Natural killer cell (primary cell): ENCODE measurements at regions of chr1 and their contacts with region 1.

Region 1: DNA sequence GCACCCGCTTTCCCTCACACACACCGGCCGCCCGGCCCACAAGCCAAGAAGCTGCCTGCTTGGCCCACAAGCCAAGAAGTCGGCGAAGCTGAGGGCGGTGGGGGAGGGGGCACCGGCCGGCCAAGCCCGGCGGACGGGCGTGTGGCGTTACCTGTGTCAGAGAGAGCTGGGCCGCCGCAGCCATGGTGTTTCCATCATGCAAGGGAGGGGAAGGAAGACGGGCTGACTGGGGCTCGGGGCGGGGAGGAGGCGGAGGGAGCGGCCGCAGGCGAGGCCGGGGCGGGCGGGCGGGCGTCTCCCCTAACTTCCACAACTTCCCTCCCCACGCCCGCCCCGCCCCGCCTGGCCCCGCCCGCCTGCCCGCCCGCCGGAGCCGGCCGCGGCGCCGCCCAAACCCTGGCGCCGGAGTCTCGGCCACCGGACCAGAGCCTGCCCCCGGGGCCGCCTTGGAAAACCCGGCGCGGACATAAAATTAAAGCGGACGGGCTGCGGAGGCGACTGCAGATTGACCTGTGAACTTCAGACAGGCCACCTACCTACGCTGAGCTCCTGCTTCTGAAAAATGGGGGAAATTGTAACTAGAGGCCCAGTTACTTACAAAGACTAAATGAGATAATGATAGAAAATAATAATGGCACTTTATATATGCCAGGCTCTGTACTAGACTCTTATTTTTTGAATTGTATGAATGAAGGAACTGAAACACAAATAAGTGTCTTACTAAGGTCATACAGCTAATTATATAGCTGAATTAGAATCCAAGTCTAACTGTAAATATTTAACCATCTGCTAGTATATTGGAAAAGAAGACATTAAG is at the start of gene EPS15:
- DNase-seq: peak; percentile 80 to 88
- ATAC-seq: peak; percentile 58 to 82 (median 73)
- H3K4me3 ChIP-seq: peak within 1 kb of the TSS; percentile 90
- H3K4me3 Mint-ChIP-seq: peak within 1 kb of the TSS; percentile 97
- H3K27ac ChIP-seq: peak within 1 kb of the TSS; percentile 82
- H3K27ac Mint-ChIP-seq: peak within 1 kb of the TSS; percentile 93
- H3K4me1 ChIP-seq: peaks cover 25% of the 10 kb centered on the region
- H3K4me1 Mint-ChIP-seq: peaks cover 59 to 62% of the 10 kb centered on the region in 2 donors
- H3K27me3 ChIP-seq: no peaks in the 10 kb centered on the region
- H3K27me3 Mint-ChIP-seq: no peaks in the 10 kb centered on the region
- CTCF ChIP-seq: no peak
- total RNA-seq, gene EPS15: 92.7 to 127 (median 93.5) TPM

Region 2: GRCh38 chr1:51444096-51444495 is 75.2 kb before region 1 on chr1:
- intact Hi-C with region 1: loop called (anchors 5 kb)
- DNase-seq: no peak
- ATAC-seq: no peak
- H3K4me3 ChIP-seq: no peak overlapping the region
- H3K4me3 Mint-ChIP-seq: no peak overlapping the region
- H3K27ac ChIP-seq: no peak overlapping the region
- H3K27ac Mint-ChIP-seq: peak overlapping the region in 1 of 2 donors; percentile 89
- H3K4me1 ChIP-seq: no peaks in the 10 kb centered on the region
- H3K4me1 Mint-ChIP-seq: peaks cover 26 to 32% of the 10 kb centered on the region in 2 donors
- H3K27me3 ChIP-seq: no peaks in the 10 kb centered on the region
- H3K27me3 Mint-ChIP-seq: no peaks in the 10 kb centered on the region
- CTCF ChIP-seq: no peak